GM12878 (cell line): ENCODE measurements at regions of chr9 and their contacts with region 1.

Region 1: DNA sequence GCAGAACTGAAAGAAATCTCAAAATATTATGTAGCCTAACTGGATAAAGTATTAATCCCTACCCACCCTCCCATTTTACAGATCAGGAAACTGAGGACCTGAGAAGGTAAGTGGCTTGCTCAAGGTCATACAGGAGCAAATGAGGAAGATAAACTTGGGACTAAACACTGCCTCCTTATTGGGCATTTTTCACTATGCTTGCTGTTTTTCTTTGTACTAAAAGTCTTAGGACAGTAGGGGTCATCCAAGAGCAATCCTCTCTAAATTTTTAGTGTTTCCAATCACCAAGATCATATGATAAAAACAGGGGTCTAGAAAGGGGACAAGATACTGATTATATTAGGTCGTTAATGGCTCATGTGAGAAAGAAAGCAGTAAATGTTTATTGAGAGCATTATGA is 80.8 kb downstream of the RORB start:
- DNase-seq: no peak
- ATAC-seq: peak; percentile 40; the same call in 2 of the 3 replicates
- H3K4me3 ChIP-seq: no peak overlapping the region
- H3K27ac ChIP-seq: no peak overlapping the region
- H3K4me1 ChIP-seq: peaks cover 3% of the 10 kb centered on the region; the same call in 1 of the 2 replicates
- H3K27me3 ChIP-seq: no peaks in the 10 kb centered on the region; a peak in 1 of 4 replicates
- CTCF ChIP-seq: peak; percentile 16 to 34 (median 25); a peak in 2 of 6 replicates
- EP300 ChIP-seq: no peak
- POLR2A ChIP-seq: no peak
- RAD21 ChIP-seq: peak; percentile 18; the same call in 1 of the 2 replicates

Region 2: DNA sequence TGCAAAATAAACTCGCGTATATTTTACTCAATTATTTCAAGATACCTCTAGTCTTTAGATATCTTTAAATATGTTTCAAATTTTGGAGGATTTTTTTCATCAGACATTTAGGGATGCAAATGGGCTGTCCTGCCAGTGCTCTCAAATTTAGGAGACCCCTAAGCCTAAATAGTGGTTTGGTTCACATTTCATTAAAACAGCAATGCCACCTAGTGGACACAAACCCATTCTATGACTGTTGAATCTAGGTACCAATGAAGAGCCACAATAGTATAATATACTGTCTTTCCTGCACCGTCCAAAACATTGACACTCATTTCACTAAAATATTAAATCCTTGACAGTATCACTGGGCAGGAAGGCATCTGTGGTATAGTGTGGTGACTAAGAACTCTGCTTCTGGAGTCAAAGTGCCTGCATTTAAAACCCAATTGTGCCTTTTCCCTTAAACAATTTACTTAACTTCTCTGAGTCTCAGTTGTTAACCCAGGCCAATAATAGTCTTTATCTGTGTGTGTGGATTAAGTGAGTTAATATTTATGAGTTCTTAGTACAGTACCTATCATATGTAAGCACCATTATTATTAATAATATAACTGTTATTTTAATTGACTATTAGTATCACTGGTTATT is 67.2 kb after region 1 on chr9:
- CTCF ChIA-PET with region 1: interaction called, 6 read pairs
- POLR2A ChIA-PET with region 1: no interaction called
- RAD21 ChIA-PET with region 1: interaction called, 3 read pairs
- SMC1A ChIA-PET with region 1: no interaction called
- in situ Hi-C with region 1: no loop called
- intact Hi-C with region 1: loop called (anchors 2 kb)
- DNase-seq: no peak
- ATAC-seq: peak; percentile 78
- H3K4me3 ChIP-seq: no peak overlapping the region
- H3K27ac ChIP-seq: no peak overlapping the region
- H3K4me1 ChIP-seq: no peaks in the 10 kb centered on the region
- H3K27me3 ChIP-seq: no peaks in the 10 kb centered on the region; a peak in 2 of 4 replicates
- CTCF ChIP-seq: peak; percentile 50 to 56 (median 51); a peak in 5 of 6 replicates
- EP300 ChIP-seq: no peak
- POLR2A ChIP-seq: no peak
- RAD21 ChIP-seq: peak; percentile 50

Region 3: DNA sequence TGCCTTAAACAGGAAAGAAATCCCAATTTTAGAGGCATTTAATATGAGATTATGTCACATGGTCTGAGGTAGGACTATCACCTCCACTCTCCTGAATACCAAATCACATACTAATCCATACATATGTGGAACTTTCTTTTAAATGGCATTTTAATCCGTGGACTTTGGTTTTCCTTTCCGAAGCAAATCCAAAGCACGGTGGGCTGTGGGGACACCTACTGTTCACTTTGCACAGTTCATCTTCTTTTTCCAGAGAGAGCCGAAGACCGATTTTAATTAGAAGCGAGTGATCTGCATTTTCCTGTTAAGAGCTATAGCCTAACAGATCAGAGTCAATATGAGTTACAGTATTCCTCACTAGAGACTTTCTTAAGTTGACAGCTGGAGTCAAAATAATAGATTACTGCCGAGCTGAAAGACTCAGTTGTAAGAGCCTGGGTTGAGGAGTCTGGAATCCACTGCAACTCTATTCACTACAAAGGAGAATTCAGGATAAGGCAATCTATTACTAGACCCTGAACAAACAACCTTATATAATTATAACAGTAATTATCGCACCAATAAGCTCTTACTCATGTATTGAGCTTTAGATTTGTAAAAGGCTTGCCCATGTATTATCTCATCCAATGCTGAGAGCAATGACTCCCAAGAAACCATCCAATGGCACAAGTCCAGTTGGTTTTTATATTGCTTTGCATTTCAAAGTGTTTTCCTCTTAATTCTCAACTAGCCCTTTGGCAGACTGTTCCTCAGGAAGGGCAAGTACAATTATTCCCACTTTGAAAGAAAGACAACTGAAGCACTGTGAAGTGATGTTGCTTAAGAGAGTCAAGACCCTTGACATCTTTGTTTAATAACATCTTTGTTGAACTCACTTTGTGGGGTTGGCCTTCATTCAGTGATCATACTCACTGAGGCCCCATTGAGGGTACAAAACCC is 165.1 kb after region 1 on chr9:
- CTCF ChIA-PET with region 1: interaction called, 3 read pairs
- POLR2A ChIA-PET with region 1: no interaction called
- RAD21 ChIA-PET with region 1: no interaction called
- SMC1A ChIA-PET with region 1: no interaction called
- in situ Hi-C with region 1: no loop called
- intact Hi-C with region 1: loop called (anchors 2 kb)
- DNase-seq: no peak
- ATAC-seq: peak; percentile 59
- H3K4me3 ChIP-seq: no peak overlapping the region
- H3K27ac ChIP-seq: no peak overlapping the region
- H3K4me1 ChIP-seq: no peaks in the 10 kb centered on the region
- H3K27me3 ChIP-seq: peaks cover 0 to 7% of the 10 kb centered on the region in 2 experiments; a peak in 2 of 4 replicates
- CTCF ChIP-seq: peak; percentile 56 to 66 (median 62)
- EP300 ChIP-seq: no peak
- POLR2A ChIP-seq: no peak
- RAD21 ChIP-seq: peak; percentile 54

Region 4: DNA sequence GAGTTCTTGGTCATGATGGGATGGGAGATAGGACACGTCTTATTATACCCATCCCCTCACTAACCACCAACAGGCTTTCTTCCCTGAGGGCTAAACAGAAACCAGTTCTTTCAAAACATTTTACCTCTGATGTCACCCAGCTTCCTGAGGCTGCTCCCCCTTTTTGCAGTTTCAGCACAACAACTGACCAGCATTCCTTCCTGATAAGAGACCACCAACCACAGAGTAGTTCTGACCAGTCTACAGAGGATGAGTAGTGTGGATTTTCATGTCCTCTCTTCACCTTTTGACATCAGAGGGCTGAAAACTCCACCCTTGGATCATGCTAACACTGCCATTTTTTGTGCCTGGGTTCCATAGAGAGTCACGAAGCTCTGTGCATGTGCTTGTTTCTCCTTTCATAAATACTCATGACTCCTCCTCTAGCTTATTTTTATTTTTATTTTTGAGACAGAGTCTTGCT is 593.0 kb after region 1 on chr9:
- CTCF ChIA-PET with region 1: no interaction called
- POLR2A ChIA-PET with region 1: no interaction called
- RAD21 ChIA-PET with region 1: no interaction called
- SMC1A ChIA-PET with region 1: no interaction called
- in situ Hi-C with region 1: no loop called
- intact Hi-C with region 1: no loop called
- DNase-seq: no peak
- ATAC-seq: no peak
- H3K4me3 ChIP-seq: no peak overlapping the region
- H3K27ac ChIP-seq: no peak overlapping the region
- H3K4me1 ChIP-seq: no peaks in the 10 kb centered on the region
- H3K27me3 ChIP-seq: no peaks in the 10 kb centered on the region
- CTCF ChIP-seq: no peak
- EP300 ChIP-seq: no peak
- POLR2A ChIP-seq: no peak
- RAD21 ChIP-seq: no peak